Right ventricle myocardium superior (tissue), 1 donor: ENCODE measurements at regions of chr10 and their contacts with region 1.

Region 1: DNA sequence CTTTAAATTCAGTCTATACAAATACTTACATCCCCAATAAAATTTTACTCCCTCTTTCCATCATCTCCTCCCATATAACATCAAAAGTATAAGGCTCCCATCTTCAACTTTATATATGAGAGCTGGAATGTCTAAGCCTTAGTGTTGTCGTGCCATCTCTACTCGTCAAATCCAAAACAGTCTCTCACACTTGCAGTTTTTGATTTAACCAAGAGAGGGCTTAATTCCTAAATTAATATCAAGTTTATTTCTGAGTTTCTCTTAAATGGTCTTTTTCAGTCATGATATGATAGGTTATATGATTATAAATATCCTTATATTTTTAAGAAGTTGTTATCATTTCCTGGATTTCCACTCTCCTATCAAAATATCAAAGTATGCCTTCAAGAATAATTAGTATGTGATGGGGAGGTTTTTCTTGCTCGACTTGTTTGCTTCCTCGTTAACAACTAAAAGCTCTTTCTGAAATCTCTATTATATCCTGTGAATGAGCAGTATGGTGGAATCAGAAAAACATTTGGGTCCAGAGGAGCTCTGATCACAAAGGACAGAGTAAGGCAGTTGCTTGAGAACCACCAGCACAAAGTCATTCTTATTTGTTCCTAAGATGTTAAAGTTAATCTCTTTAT is 12.5 kb upstream of the LIPK start:
- DNase-seq: no peak
- ATAC-seq: no peak

Region 2: GRCh38 chr10:88781206-88781605 is 87.7 kb after region 1 on chr10:
- intact Hi-C with region 1: no loop called
- DNase-seq: no peak
- ATAC-seq: no peak

Region 3: GRCh38 chr10:88791924-88792323 is 98.4 kb after region 1 on chr10:
- intact Hi-C with region 1: loop called (anchors 10 kb)
- DNase-seq: no peak
- ATAC-seq: peak; percentile 48